Calu3 (cell line): ENCODE measurements at regions of chr7 and their contacts with region 1.

Region 1: GRCh38 chr7:94223375-94224070 is 171.2 kb upstream of the COL1A2 start:
- DNase-seq: peak; percentile 38
- H3K4me3 Mint-ChIP-seq: peak overlapping the region; percentile 51
- H3K27ac Mint-ChIP-seq: no peak overlapping the region
- H3K4me1 Mint-ChIP-seq: no peaks in the 10 kb centered on the region
- H3K27me3 Mint-ChIP-seq: no peaks in the 10 kb centered on the region
- CTCF ChIP-seq: no peak

Region 2: GRCh38 chr7:93622036-93623033 is 601.2 kb before region 1 on chr7:
- CTCF ChIA-PET with region 1: no interaction called
- intact Hi-C with region 1: loop called (anchors 10 kb)
- DNase-seq: peak; percentile 20
- H3K4me3 Mint-ChIP-seq: peak overlapping the region; percentile 60
- H3K27ac Mint-ChIP-seq: peak overlapping the region; percentile 60
- H3K4me1 Mint-ChIP-seq: peaks cover 7% of the 10 kb centered on the region
- H3K27me3 Mint-ChIP-seq: no peaks in the 10 kb centered on the region
- CTCF ChIP-seq: peak; percentile 59

Region 3: GRCh38 chr7:93715234-93715633 is 508.3 kb before region 1 on chr7:
- CTCF ChIA-PET with region 1: no interaction called
- intact Hi-C with region 1: loop called (anchors 5 kb)
- DNase-seq: peak; percentile 65
- H3K4me3 Mint-ChIP-seq: no peak overlapping the region
- H3K27ac Mint-ChIP-seq: no peak overlapping the region
- H3K4me1 Mint-ChIP-seq: peaks cover 27% of the 10 kb centered on the region
- H3K27me3 Mint-ChIP-seq: no peaks in the 10 kb centered on the region
- CTCF ChIP-seq: peak; percentile 47

Region 4: GRCh38 chr7:93799750-93800357 is 423.7 kb before region 1 on chr7:
- CTCF ChIA-PET with region 1: no interaction called
- intact Hi-C with region 1: loop called (anchors 5 kb)
- DNase-seq: no peak
- H3K4me3 Mint-ChIP-seq: no peak overlapping the region
- H3K27ac Mint-ChIP-seq: peak overlapping the region; percentile 16
- H3K4me1 Mint-ChIP-seq: peaks cover 10% of the 10 kb centered on the region
- H3K27me3 Mint-ChIP-seq: no peaks in the 10 kb centered on the region
- CTCF ChIP-seq: no peak